ENCODE measurements at regions of chr7 and their contacts with region 1.

Region 1: DNA sequence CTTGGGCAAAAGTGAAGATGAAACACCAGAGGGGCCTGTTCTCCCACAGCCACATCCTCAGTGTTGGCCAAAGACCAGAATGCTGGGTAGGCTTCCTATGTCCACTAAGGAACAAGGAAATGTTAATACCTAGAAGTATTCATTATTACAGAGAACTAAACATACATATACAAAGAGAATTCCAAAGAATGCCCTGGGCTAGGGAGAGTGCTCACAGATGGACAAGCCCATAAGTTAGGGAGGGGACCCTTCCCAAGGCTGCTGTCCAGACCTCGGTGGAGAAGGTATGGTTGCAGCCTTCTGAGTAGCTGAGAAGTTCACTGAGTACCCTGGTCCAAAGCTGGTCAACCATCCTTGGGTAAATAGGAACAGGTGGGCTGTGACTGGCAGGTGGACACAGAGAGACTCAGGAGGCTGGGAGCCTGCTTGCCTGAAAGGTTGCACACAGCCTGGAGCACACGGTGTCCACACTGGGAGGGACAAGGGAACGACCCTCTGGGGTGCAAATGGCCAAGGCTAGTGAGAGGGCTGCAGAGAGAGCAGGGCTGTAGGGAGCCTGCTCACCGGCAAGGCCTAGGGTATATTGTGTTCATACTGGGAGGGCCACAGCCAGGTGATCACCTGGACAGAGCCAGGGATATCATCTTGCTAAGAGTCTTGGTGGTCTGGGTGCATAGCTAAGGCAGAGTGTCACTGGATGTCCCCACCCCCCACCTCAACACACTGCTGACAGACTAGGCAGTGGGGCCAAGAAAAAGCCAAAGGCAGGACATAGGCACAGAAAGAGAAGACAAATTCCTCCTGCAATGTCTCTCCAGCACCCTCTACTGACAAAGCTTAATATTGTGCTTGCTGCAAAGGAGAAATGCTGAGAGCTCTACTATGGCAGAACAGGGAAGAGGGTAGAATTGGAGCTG is 40.3 kb downstream of the CPVL start:
- DNase-seq: peak; percentile 72
- H3K4me3 Mint-ChIP-seq: no peak overlapping the region
- H3K27ac Mint-ChIP-seq: peak overlapping the region; percentile 60
- H3K4me1 Mint-ChIP-seq: peaks cover 47% of the 10 kb centered on the region
- H3K27me3 Mint-ChIP-seq: no peaks in the 10 kb centered on the region
- CTCF ChIP-seq: peak; percentile 80

Region 2: DNA sequence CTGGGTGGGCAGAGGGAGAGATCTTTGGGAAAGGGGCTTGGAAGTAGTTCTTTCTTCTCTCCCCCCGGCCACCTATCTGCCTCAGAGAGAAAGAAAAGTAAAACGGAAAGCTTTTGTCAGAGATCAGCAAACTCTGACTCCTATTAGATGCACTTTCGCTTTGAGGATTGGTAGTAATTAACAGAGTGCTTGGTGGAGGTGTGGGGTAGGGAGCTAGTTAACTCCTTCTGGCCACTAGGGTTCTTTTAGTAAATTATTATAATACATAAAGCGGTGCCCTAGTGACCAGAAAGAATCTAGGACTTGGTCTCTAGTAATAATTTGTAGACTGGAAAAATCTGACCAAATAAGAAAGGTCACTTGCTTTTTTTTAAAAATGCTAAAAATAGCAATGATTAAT is 14.3 kb before region 1 on chr7:
- CTCF ChIA-PET with region 1: interaction called, 20 read pairs
- POLR2A ChIA-PET with region 1: no interaction called
- intact Hi-C with region 1: no loop called
- DNase-seq: no peak
- H3K4me3 Mint-ChIP-seq: peak overlapping the region; percentile 54
- H3K27ac Mint-ChIP-seq: peak overlapping the region; percentile 83
- H3K4me1 Mint-ChIP-seq: peaks cover 7% of the 10 kb centered on the region
- H3K27me3 Mint-ChIP-seq: no peaks in the 10 kb centered on the region
- CTCF ChIP-seq: no peak

Region 3: DNA sequence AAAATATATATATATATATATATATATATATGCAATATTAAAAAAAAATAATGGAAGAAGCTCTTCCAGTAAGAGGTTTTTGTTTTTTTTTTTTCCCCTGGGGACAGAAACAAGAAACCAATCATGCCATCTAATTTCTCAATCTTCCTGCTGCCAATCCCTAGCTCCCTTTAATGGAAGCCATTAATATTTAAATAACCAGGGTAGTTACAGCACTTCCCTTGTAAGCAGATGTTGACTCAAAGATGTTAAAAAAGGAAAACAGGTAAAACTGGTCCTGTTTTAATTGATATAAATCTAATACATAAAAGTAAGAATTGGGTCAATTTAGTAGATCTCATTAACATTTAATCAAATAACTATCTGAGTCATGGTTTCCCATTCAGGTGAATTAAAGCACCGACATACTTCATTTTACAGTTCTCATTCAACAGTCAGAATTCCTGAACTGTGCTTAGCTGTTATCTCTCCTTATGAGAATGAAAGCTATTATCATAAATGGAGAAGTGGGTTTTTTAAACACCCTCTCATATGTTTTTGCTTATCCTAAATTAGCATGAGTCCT is 17.7 kb after region 1 on chr7:
- CTCF ChIA-PET with region 1: interaction called, 10 read pairs
- POLR2A ChIA-PET with region 1: no interaction called
- intact Hi-C with region 1: no loop called
- DNase-seq: no peak
- H3K4me3 Mint-ChIP-seq: no peak overlapping the region
- H3K27ac Mint-ChIP-seq: no peak overlapping the region
- H3K4me1 Mint-ChIP-seq: peaks cover 7% of the 10 kb centered on the region
- H3K27me3 Mint-ChIP-seq: no peaks in the 10 kb centered on the region
- CTCF ChIP-seq: no peak

Region 4: DNA sequence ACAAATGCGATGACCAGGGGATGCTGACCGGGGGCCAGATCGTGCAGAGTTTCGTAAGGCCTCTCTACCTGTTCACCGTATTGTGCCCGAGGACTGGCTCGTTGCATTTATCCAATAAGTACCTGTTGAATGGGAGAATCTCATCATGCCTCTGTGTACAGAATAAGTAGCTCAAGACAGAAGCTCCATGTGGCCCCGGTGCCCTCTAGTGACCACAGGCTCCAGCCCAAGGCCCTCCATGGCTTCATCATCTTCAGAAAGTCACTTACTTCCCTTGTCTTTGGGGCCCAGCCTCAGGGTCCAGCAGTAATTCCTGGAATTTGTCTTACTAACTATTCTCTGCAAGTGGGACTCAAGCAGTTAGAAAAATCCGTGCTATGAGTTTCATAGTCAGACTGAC is 239.6 kb after region 1 on chr7:
- CTCF ChIA-PET with region 1: interaction called, 3 read pairs
- POLR2A ChIA-PET with region 1: interaction called, 3 read pairs
- intact Hi-C with region 1: loop called (anchors 2 kb)
- DNase-seq: peak; percentile 43
- H3K4me3 Mint-ChIP-seq: no peak overlapping the region
- H3K27ac Mint-ChIP-seq: no peak overlapping the region
- H3K4me1 Mint-ChIP-seq: peaks cover 19% of the 10 kb centered on the region
- H3K27me3 Mint-ChIP-seq: no peaks in the 10 kb centered on the region
- CTCF ChIP-seq: peak; percentile 63

Region 5: DNA sequence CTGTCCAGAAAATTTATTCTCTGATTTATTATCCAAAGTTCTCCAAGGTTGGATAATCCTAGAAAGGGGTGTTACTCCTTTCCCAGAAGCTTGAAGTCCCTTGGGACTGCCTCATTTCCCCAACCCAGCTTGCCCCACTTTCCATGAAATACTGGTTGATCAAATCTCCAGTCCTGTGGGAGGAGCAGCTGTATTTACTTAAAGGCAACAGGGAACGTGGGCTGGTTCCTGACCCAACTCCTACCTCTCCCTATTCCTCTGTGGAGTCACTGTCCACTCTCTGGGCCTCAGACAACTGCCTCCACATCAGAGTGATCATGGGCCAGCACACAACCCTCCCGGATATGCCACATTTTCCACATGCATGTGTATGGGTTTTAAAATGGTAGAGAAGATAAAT is 291.4 kb after region 1 on chr7:
- CTCF ChIA-PET with region 1: interaction called, 12 read pairs
- POLR2A ChIA-PET with region 1: no interaction called
- intact Hi-C with region 1: no loop called
- DNase-seq: no peak
- H3K4me3 Mint-ChIP-seq: no peak overlapping the region
- H3K27ac Mint-ChIP-seq: no peak overlapping the region
- H3K4me1 Mint-ChIP-seq: no peaks in the 10 kb centered on the region
- H3K27me3 Mint-ChIP-seq: no peaks in the 10 kb centered on the region
- CTCF ChIP-seq: no peak

Region 6: GRCh38 chr7:29622335-29623265 is 516.6 kb after region 1 on chr7:
- CTCF ChIA-PET with region 1: no interaction called
- POLR2A ChIA-PET with region 1: no interaction called
- intact Hi-C with region 1: loop called (anchors 10 kb)
- DNase-seq: peak; percentile 95
- H3K4me3 Mint-ChIP-seq: peak overlapping the region; percentile 66
- H3K27ac Mint-ChIP-seq: peak overlapping the region; percentile 88
- H3K4me1 Mint-ChIP-seq: peaks cover 31% of the 10 kb centered on the region
- H3K27me3 Mint-ChIP-seq: no peaks in the 10 kb centered on the region
- CTCF ChIP-seq: no peak

Region 7: GRCh38 chr7:29639881-29640595 is 534.0 kb after region 1 on chr7:
- CTCF ChIA-PET with region 1: no interaction called
- POLR2A ChIA-PET with region 1: no interaction called
- intact Hi-C with region 1: no loop called
- DNase-seq: no peak
- H3K4me3 Mint-ChIP-seq: no peak overlapping the region
- H3K27ac Mint-ChIP-seq: no peak overlapping the region
- H3K4me1 Mint-ChIP-seq: peaks cover 5% of the 10 kb centered on the region
- H3K27me3 Mint-ChIP-seq: no peaks in the 10 kb centered on the region
- CTCF ChIP-seq: no peak

Measured in MCF 10A (cell line).